Activated CD8-positive, alpha-beta memory T cell treated with anti-CD3 and anti-CD28 coated beads, Interleukin-2, amount 10 ng/mL, durations not matched to agents 7 days and 5 days (primary cell): ENCODE measurements at regions of chr16 and their contacts with region 1.

Region 1: GRCh38 chr16:28984619-28985135 is at the start of gene LAT:
- DNase-seq: peak; percentile 88
- ATAC-seq: peak; percentile 71
- H3K4me3 Mint-ChIP-seq: peak within 1 kb of the TSS; percentile 100
- H3K27ac Mint-ChIP-seq: peak within 1 kb of the TSS; percentile 98
- H3K4me1 Mint-ChIP-seq: peaks cover 44% of the 10 kb centered on the region
- H3K27me3 Mint-ChIP-seq: no peaks in the 10 kb centered on the region
- total RNA-seq, gene LAT: 200 to 236 TPM

Region 2: DNA sequence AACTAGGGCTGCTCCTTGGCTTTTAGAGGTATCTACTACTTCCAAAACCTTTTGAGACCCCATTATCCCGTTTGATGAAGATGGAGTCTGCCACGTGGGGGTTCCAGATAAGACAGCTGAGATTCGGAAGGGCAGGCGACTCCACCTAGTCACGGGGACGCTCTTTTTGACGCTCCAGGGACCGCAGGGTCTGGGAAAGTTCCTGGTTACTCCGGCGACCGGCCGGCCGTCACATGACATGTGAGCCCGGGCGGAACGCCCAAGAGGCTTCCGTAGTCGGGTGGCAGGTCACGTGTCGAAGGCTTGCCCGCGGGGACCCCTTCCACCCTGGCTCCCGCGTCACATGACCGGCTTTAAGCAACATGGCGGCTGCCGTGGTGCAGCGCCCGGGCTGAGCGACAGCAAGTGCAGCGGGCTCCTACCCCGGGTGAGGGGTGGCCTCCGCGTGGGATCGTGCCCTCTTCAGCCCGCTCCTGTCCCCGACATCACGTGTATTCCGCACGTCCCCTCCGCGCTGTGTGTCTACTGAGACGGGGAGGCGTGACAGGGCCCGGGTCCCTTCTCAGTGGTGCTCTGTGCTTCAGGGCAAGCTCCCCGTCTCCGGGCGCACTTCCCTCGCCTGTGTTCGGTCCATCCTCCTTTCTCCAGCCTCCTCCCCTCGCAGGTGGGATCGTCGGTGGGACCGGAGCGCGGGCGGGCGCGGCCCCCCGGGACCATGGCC is 10.1 kb before region 1 on chr16 and contains the start of gene SPNS1:
- CTCF ChIA-PET with region 1: interaction called, 27 read pairs
- DNase-seq: peak; percentile 98
- ATAC-seq: peak; percentile 97
- H3K4me3 Mint-ChIP-seq: peak within 1 kb of the TSS; percentile 95
- H3K27ac Mint-ChIP-seq: peak within 1 kb of the TSS; percentile 91
- H3K4me1 Mint-ChIP-seq: peaks cover 28% of the 10 kb centered on the region
- H3K27me3 Mint-ChIP-seq: no peaks in the 10 kb centered on the region
- total RNA-seq, gene SPNS1: 22.1 to 27.6 TPM

Region 3: DNA sequence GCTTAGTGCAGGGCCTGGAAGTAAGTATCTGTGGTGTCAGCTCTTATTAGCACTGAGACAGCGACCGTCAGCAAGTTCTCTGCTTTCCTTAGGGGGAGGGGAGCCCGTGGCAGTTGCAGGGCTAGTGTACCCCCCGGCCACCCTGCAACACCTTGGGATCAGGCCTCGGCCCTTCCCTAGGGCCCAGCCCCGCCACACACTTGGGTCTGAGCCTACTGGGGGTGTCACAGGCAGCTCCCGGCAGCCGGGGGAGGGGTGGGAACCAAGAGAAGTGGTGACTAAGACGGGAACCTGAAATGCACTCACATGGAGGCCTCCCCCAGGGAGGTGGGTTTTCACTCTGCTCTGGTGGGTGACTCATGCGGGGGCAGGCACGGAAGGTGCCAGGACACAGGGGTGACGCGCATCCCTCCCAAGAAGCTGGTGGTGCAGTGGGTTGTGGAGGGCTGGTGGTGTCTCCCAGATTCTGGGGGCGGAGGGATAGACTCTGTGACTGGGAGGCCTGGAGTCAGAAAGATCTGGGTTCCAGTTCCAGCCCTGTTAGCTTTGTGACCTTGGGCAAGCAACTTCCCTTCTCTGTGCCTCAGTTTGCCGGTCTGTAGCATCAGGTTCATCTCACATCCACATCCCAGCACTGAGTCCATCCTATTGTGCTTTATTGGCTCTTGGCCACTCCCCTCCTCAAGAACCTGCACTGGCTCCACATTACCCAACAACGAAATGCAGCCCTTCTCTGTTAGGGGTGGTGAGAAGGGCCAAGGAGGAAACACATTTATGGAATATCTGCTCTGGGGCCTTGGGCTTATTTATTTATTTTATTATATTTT is 44.7 kb after region 1 on chr16:
- CTCF ChIA-PET with region 1: interaction called, 11 read pairs
- DNase-seq: peak; percentile 90
- ATAC-seq: peak; percentile 97
- H3K4me3 Mint-ChIP-seq: no peak overlapping the region
- H3K27ac Mint-ChIP-seq: peak overlapping the region; percentile 80
- H3K4me1 Mint-ChIP-seq: peaks cover 34% of the 10 kb centered on the region
- H3K27me3 Mint-ChIP-seq: no peaks in the 10 kb centered on the region

Region 4: GRCh38 chr16:29107299-29107698 is 122.6 kb after region 1 on chr16:
- CTCF ChIA-PET with region 1: no interaction called
- DNase-seq: no peak
- ATAC-seq: no peak
- H3K4me3 Mint-ChIP-seq: no peak overlapping the region
- H3K27ac Mint-ChIP-seq: no peak overlapping the region
- H3K4me1 Mint-ChIP-seq: peaks cover 25% of the 10 kb centered on the region
- H3K27me3 Mint-ChIP-seq: no peaks in the 10 kb centered on the region